Ovary (tissue), 10 donors: ENCODE measurements at regions of chr1 and their contacts with region 1.

Region 1: GRCh38 chr1:205273551-205273982 is 45.8 kb downstream of the TMCC2 start:
- DNase-seq: peak; percentile 76 to 90 (median 87)
- H3K4me3 ChIP-seq: no peak overlapping the region
- H3K27ac ChIP-seq: no peak overlapping the region
- H3K4me1 ChIP-seq: peaks cover 6% of the 10 kb centered on the region
- H3K27me3 ChIP-seq: no peaks in the 10 kb centered on the region
- CTCF ChIP-seq: peak; percentile 88 to 96 (median 96)
- EP300 ChIP-seq: no peak
- POLR2A ChIP-seq: no peak

Region 2: GRCh38 chr1:204736836-204737387 is 536.7 kb before region 1 on chr1:
- intact Hi-C with region 1: no loop called
- DNase-seq: no peak
- H3K4me3 ChIP-seq: no peak overlapping the region
- H3K27ac ChIP-seq: no peak overlapping the region
- H3K4me1 ChIP-seq: no peaks in the 10 kb centered on the region
- H3K27me3 ChIP-seq: no peaks in the 10 kb centered on the region
- CTCF ChIP-seq: no peak
- EP300 ChIP-seq: no peak
- POLR2A ChIP-seq: no peak

Region 3: DNA sequence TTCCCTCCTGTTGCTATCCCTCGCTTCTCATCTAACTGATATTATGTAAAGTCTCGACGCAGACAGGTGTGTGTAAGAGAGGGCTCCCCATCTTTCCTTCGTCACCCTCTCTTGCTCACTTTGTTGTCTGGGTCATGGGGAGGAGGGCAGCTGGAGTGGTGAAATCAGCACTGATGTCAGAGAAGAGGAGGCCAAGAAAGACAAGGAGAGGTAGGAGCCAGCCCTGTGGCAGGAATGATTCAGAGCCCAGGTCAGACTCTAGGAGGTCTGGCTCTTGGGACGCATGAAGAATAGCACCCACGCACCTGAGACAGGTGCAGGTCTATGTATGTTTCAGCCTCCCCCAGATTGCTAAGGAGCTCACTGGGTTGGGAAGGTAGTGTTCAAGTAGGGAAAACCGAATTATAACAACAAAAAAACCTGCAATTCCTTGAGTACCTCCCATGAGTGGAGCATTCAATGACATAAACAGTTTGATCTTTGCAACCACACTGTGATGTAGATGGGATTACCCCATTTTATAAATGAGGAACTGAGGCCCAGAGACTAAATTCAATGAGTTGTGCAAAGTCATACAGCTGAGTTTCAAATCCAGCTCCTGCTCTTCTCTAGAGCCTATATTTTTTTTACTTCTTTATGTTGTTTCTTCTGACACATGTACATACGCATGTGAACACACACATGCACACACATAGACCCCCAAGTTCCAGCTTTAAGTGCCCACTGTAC is 37.6 kb after region 1 on chr1:
- intact Hi-C with region 1: no loop called
- DNase-seq: no peak
- H3K4me3 ChIP-seq: no peak overlapping the region
- H3K27ac ChIP-seq: no peak overlapping the region
- H3K4me1 ChIP-seq: peaks cover 7% of the 10 kb centered on the region
- H3K27me3 ChIP-seq: no peaks in the 10 kb centered on the region
- CTCF ChIP-seq: no peak
- EP300 ChIP-seq: no peak
- POLR2A ChIP-seq: no peak

Region 4: GRCh38 chr1:205321164-205321958 is 47.8 kb after region 1 on chr1 and contains the start of gene NUAK2:
- intact Hi-C with region 1: loop called (anchors 1 to 5 kb)
- DNase-seq: peak; percentile 86 to 92 (median 88)
- H3K4me3 ChIP-seq: peak within 1 kb of the TSS; percentile 52
- H3K27ac ChIP-seq: peak within 1 kb of the TSS in 1 of 2 donors; percentile 47
- H3K4me1 ChIP-seq: peaks cover 15% of the 10 kb centered on the region
- H3K27me3 ChIP-seq: no peaks in the 10 kb centered on the region
- CTCF ChIP-seq: peak in 1 of 3 donors; percentile 33
- EP300 ChIP-seq: no peak
- POLR2A ChIP-seq: peak; percentile 20
- total RNA-seq, gene NUAK2: 2.7 to 53.2 (median 3.7) TPM

Region 5: GRCh38 chr1:205438213-205439157 is 164.9 kb after region 1 on chr1:
- intact Hi-C with region 1: loop called in 1 of 4 experiments (anchors 5 kb)
- DNase-seq: peak; percentile 91 to 93 (median 91)
- H3K4me3 ChIP-seq: no peak overlapping the region
- H3K27ac ChIP-seq: peak overlapping the region; percentile 27 to 31
- H3K4me1 ChIP-seq: peaks cover 12% of the 10 kb centered on the region
- H3K27me3 ChIP-seq: no peaks in the 10 kb centered on the region
- CTCF ChIP-seq: peak; percentile 67 to 90 (median 86)
- EP300 ChIP-seq: no peak
- POLR2A ChIP-seq: no peak